ENCODE measurements at regions of chr9 and their contacts with region 1.

Region 1: GRCh38 chr9:86494644-86495111 is 140.5 kb upstream of the TUT7 start:
- DNase-seq: no peak
- ATAC-seq: peak; percentile 55 to 85

Region 2: DNA sequence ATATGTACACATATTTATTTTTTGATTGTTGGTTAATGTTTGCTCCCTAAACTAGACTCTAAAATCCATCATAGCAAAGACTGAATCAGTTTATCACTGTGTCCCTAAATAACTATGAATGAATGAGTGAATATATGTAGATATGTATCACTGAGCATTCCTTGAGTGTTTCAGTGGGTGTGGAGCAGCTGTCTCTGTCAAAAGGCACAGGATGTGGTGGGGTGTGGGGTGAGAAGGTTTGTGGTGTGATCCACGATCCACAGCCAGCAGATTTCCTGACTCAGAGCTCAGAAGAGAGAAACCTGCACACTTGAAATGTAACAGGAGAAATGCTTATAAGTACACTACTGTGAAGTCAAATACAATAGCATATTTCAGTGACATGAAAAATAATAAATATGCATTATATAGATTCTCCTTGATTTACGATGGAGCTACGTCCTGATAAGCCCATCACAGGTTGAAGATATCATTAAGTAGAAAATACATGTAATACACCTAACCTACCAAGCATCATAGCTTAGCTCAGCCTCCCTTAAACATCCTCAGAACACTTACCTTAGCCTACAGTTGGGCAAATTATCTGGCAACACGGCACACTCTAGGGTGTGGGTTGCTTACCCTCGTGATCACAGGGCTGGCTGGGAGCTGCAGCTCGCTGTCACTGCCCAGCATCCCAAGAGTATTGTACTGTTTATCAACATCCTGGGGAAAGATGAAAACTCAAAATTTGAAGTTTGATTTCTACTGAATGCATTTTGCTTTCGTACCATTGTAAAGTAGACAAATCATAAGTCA is 165.7 kb after region 1 on chr9:
- intact Hi-C with region 1: no loop called
- DNase-seq: no peak
- ATAC-seq: peak in 1 of 2 donors; percentile 33

Region 3: GRCh38 chr9:86902991-86903733 is 408.5 kb after region 1 on chr9:
- intact Hi-C with region 1: loop called in 1 of 2 experiments (anchors 5 kb)
- DNase-seq: no peak
- ATAC-seq: peak in 1 of 2 donors; percentile 31

Measured in left cardiac atrium (tissue), 4 donors.